ENCODE measurements at regions of chr12 and their contacts with region 1.

Region 1: DNA sequence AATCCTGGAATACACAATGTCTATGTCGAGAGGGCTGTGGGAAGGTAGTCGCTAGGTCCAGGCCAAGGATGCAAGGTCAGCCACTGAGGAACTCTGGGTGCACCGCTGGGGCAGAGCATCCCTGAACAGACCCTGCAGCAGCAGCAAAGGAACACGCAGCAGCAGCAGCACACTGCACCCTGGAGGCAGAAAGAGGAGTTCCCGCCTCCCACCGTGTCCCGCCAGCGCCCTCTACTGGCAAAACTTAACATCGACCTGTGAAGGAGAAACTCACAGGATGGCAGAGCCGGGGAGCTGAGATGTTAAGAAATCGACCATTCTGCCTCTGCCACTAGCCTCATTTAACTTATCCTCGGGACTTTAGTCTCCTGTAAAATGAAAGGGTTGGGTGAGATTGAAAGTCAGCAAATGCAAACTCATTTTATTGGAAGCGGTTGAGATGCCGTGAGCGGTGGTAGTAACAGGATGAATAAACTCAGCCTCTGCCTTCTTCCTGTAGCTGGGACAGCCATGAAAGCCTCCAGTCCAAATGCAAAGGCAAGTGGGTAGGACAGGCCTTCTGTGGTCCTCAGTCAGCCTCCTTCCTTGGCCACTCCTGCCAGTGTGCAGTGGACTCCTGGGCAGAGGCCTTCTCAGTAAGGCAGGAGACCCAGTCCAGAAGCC is 45.6 kb downstream of the STAB2 start:
- DNase-seq: peak; percentile 84 to 89 (median 88)
- ATAC-seq: peak; percentile 99
- H3K4me3 ChIP-seq: no peak overlapping the region
- H3K27ac ChIP-seq: no peak overlapping the region
- H3K4me1 ChIP-seq: no peaks in the 10 kb centered on the region
- H3K27me3 ChIP-seq: peaks cover 0 to 7% of the 10 kb centered on the region in 2 experiments; a peak in 3 of 5 replicates
- CTCF ChIP-seq: peak; percentile 99 to 100 (median 100)
- EP300 ChIP-seq: no peak
- POLR2A ChIP-seq: no peak
- RAD21 ChIP-seq: peak; percentile 84 to 92

Region 2: GRCh38 chr12:102948941-102949352 is 683.7 kb before region 1 on chr12:
- CTCF ChIA-PET with region 1: interaction called, 7 read pairs
- POLR2A ChIA-PET with region 1: no interaction called
- in situ Hi-C with region 1: no loop called
- intact Hi-C with region 1: loop called (anchors 5 kb)
- DNase-seq: peak; percentile 45 to 56 (median 52)
- ATAC-seq: peak; percentile 60; the same call in 2 of the 3 replicates
- H3K4me3 ChIP-seq: no peak overlapping the region
- H3K27ac ChIP-seq: no peak overlapping the region
- H3K4me1 ChIP-seq: peaks cover 0 to 3% of the 10 kb centered on the region in 2 experiments; a peak in 1 of 5 replicates
- H3K27me3 ChIP-seq: no peaks in the 10 kb centered on the region
- CTCF ChIP-seq: peak; percentile 67 to 86 (median 77)
- EP300 ChIP-seq: no peak
- POLR2A ChIP-seq: no peak
- RAD21 ChIP-seq: peak; percentile 55 to 77

Region 3: DNA sequence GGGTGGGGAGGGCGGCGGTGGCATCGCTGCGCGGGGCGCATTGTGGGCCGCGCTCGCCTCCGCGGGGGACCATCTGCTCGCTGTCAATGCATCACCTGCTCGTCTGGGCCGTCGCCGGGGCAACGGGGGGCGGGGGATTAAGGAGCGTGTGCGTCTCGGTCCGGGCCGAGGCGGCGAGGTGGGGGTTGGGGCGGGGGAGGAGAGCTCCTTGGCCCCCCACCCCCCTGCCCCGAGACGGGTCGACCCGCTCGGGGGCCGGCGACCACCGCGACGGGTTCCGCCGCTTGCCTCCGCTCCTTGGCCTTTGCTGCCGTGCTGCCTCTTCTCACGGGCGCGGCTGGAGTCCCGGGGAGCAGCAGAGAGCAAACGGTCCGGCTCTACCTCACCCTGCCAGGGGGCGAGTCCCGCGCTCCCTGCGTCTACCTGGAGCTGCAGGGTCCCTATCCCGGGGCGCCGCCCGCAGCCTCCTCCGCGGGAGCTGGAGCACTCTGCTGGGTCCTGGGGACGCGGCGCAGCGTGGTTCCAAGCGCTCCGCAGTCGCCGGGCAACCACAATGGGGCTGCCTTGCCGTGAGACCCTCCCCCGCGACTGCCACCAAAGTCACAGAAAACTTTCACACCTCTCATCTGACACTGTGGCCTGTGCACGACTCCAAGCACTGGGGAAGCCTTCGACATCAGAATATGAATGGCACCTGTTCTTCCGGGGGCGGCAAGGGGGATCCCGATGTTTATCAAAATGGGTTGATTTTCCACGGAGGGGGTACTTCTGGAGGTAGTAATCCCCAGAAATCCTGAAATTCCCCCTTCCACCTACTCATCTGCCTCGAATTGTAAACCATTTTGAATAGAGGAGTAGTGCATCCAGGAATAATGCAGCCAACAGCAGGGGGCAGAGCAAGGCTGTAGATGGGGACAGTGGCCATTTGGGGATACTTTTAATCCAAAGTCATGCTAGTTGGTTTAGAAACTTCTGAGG is 136.9 kb before region 1 on chr12 and contains the start of gene C12orf42:
- CTCF ChIA-PET with region 1: no interaction called
- POLR2A ChIA-PET with region 1: no interaction called
- in situ Hi-C with region 1: no loop called
- intact Hi-C with region 1: loop called (anchors 10 kb)
- DNase-seq: peak in 2 of 4 experiments; percentile 9 to 16
- ATAC-seq: peak; percentile 84
- H3K4me3 ChIP-seq: no peak within 1 kb of the TSS
- H3K27ac ChIP-seq: no peak within 1 kb of the TSS
- H3K4me1 ChIP-seq: peaks cover 0 to 5% of the 10 kb centered on the region in 2 experiments; a peak in 1 of 5 replicates
- H3K27me3 ChIP-seq: no peaks in the 10 kb centered on the region
- CTCF ChIP-seq: peak; percentile 39 to 46 (median 44); a peak in 4 of 6 replicates
- EP300 ChIP-seq: no peak
- POLR2A ChIP-seq: no peak
- RAD21 ChIP-seq: peak; percentile 16 to 35; a peak in 2 of 4 replicates
- polyA plus RNA-seq, gene C12orf42: not detected

Region 4: GRCh38 chr12:103571286-103571685 is 61.4 kb before region 1 on chr12:
- CTCF ChIA-PET with region 1: interaction called, 15 read pairs
- POLR2A ChIA-PET with region 1: no interaction called
- in situ Hi-C with region 1: no loop called
- intact Hi-C with region 1: loop called (anchors 1 kb)
- DNase-seq: no peak
- ATAC-seq: no peak
- H3K4me3 ChIP-seq: no peak overlapping the region
- H3K27ac ChIP-seq: no peak overlapping the region
- H3K4me1 ChIP-seq: no peaks in the 10 kb centered on the region; a peak in 2 of 5 replicates
- H3K27me3 ChIP-seq: no peaks in the 10 kb centered on the region
- CTCF ChIP-seq: no peak
- EP300 ChIP-seq: no peak
- POLR2A ChIP-seq: no peak
- RAD21 ChIP-seq: no peak

Measured in K562 (cell line).